Testis (tissue), 5 donors: ENCODE measurements at regions of chr3 and their contacts with region 1.

Region 1: DNA sequence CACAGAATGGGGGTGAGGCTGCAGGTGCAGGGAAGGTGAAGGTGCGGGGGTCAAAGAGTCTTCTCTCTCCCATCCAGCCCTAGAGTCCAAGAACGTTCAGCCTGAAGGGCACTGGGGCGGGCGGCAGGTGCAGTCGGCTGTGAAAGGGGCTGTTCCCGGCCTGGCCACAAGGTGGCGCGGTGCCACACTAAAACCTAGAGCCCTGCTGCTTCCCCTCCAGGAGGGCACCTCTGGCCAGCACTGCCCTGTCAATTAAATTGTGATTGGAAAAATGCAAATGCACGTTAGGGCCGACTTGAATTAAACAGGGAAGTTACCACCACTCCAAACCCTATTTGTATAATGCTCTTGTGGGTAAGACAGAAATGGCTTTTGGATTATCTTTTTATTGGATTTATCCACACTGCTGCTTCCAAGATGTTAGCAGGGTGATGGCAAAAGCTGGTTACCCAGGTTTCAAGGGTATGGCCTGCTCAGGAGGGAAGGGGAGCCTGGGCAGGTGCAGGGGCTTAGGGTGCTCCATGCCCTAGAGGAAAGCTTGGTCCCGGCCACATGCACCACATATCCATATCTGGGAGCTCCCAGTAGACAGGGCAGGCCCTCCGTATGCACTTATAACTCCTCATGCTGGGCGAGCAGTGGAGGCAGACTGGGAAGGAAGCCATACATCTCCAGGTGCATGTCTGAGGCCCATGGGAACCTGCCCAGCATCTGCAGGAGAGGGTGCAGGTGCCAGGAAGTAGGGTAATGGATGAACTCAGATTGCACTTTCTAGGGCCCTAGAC is 119.8 kb downstream of the ADCY5 start:
- DNase-seq: peak; percentile 90
- H3K4me3 ChIP-seq: no peak overlapping the region
- H3K27ac ChIP-seq: peak overlapping the region; percentile 76 to 82
- H3K4me1 ChIP-seq: peaks cover 36% of the 10 kb centered on the region
- H3K27me3 ChIP-seq: no peaks in the 10 kb centered on the region
- CTCF ChIP-seq: peak; percentile 91 to 99 (median 92)
- POLR2A ChIP-seq: no peak

Region 2: DNA sequence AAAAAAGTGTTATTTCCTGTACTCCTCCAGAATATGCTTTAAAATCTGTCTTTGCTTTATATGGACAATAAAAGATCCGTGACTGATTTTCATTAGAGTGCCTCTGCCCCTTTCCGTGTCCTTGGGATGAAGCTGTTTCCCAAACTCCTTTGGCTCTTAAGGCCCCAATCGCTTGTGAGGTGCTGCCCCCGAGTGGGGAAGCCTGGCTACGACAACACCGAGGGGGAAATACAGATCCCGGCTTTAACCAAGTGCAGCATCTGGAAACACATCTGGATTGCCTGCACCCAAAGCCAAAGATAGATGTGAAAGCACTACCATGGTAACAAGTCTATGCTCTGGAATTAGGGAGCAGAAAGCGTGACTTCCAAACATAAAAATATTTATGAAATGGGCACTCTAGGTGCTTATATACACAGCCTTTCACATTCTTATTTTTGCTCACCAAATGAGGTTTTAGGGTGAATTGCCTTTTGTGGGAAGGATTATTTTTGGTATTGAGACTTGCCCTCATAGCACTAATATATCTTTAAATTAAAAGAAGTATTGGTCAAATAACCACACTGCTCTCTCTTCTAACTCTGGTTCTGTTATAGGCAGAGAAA is 160.5 kb after region 1 on chr3:
- intact Hi-C with region 1: loop called (anchors 2 kb)
- DNase-seq: peak; percentile 80
- H3K4me3 ChIP-seq: no peak overlapping the region
- H3K27ac ChIP-seq: peak overlapping the region in 1 of 2 donors; percentile 57
- H3K4me1 ChIP-seq: peaks cover 9% of the 10 kb centered on the region
- H3K27me3 ChIP-seq: no peaks in the 10 kb centered on the region
- CTCF ChIP-seq: peak; percentile 75 to 87 (median 86)
- POLR2A ChIP-seq: no peak

Region 3: DNA sequence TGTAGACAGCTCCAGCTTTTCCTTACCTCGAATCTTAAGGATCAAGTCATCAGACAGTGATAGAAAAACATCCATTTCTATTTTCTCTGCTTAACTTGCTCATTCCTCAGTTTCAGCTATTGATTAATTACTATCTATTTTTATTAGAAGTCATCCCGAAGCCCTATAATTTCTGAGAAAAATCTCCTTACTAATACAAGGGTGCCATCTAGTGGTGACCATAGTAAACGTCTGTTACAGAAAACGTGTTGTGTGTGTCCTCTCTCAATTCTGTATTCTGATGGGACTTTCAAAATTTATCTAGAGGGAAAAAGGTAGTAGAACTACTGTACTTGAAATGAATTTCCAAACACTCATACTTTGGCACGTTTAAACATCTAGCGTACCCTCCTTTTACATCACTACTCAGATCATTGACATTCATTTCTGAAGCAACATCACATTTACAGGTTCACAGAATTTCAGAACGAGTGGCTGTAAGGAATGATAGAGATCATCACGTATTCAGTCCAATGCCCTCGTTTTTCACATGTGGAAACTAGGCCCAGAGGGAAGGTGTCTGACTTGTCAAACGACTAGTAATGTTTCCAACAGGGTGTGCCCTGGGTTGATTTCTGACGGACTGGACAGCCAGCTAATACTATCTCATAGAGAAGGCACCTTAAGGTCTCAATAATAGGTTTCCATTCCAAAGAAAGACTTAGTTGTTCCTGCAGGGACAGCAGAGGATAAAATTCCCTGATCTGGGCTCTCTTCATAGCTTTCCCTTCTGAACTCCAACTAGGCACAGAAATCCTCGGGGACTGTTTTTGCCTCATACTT is 230.2 kb after region 1 on chr3:
- intact Hi-C with region 1: loop called (anchors 5 kb)
- DNase-seq: peak; percentile 47
- H3K4me3 ChIP-seq: no peak overlapping the region
- H3K27ac ChIP-seq: no peak overlapping the region
- H3K4me1 ChIP-seq: peaks cover 9% of the 10 kb centered on the region
- H3K27me3 ChIP-seq: no peaks in the 10 kb centered on the region
- CTCF ChIP-seq: peak; percentile 57 to 87 (median 58)
- POLR2A ChIP-seq: no peak